ENCODE measurements at regions of chr5 and their contacts with region 1.

Region 1: GRCh38 chr5:66994814-66995213 is 201.8 kb downstream of the CD180 start:
- DNase-seq: no peak
- H3K4me3 ChIP-seq: no peak overlapping the region
- H3K27ac ChIP-seq: no peak overlapping the region
- H3K27me3 ChIP-seq: no peaks in the 10 kb centered on the region
- CTCF ChIP-seq: no peak

Region 2: GRCh38 chr5:67106626-67107342 is 112.0 kb after region 1 on chr5:
- intact Hi-C with region 1: no loop called
- DNase-seq: no peak
- H3K4me3 ChIP-seq: no peak overlapping the region
- H3K27ac ChIP-seq: peak overlapping the region in 19 of 59 donors; percentile 0 to 55 (median 29)
- H3K27me3 ChIP-seq: no peaks in the 10 kb centered on the region
- CTCF ChIP-seq: no peak

Region 3: DNA sequence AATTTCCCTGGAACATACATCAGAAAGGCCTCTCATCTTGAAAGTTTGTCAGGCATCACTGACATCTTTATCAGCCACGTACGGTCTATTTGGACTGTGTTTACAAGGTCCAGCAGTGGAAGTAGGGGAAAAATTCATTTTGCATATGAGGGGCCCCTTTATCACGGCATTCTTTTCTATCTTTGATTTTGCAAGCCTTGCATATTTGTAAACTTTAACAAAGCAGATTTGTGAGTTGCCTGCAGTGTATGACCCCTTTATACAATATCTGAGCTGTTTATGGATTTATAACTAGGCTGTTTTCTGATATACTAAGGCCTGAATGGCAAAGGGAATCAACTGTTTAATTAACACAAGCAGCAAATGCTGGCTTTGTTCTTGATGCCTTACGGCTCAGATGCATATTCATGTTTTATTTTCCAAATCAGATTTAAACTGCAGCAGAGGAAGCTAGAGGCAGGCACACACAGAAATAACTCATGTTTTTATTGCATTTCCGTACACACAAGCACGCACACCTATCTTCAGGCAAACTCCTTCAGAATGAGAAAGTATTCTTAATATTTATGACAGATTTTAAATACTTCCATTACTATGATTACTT is 140.7 kb after region 1 on chr5:
- intact Hi-C with region 1: loop called in 1 of 2 experiments (anchors 5 kb)
- DNase-seq: no peak
- H3K4me3 ChIP-seq: no peak overlapping the region
- H3K27ac ChIP-seq: no peak overlapping the region
- H3K27me3 ChIP-seq: no peaks in the 10 kb centered on the region
- CTCF ChIP-seq: no peak

Measured in dorsolateral prefrontal cortex (tissue), 120 donors.